Sciatic nerve (tissue), 2 donors: ENCODE measurements at regions of chr18 and their contacts with region 1.

Region 1: DNA sequence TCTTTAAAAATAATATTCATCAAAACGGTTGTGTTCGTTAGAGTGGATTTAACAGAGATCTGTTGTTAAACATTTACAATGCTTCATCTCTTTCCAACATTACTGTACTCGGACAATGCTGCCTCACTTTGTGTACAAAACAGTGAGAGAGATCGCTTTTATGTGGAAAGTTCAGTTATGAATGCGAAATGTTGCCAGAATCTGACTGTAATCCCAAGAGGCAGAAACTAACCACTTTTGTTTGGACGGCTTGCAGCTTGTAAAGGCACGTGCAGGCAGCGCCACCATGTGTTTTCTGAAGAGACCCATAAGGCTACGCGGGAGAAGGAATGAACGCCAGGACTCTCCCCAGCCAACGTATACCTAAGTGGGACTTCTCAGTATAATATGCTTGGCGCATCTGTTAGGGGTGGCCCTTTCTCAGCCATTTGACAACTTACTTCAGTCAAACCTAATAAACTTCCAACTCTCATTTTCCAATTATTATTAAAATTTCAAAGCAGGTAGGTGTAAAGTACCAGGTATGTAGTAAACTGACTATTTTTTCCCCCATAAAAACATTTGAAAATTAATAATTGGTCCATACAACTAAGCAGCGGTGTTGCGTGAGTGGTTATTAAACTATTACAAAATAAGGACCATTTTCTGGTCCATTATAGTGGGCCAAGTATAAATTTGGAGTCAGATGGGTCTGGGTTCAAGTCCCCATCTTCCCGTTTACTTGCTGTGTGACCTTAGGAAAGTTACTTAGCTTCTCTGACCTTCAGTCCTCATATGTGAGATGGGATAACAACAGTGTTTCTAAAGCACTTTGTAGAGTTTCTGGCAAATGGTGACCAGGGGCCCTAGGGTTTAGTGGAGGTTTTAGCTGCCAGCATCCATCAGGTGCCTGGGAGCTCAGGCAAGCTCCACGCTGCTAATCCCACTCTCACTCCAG is 5.6 kb upstream of the NAPG start:
- DNase-seq: peak; percentile 92
- ATAC-seq: peak; percentile 90

Region 2: GRCh38 chr18:9971313-9971920 is 548.9 kb before region 1 on chr18:
- intact Hi-C with region 1: loop called (anchors 2 kb)
- DNase-seq: peak; percentile 87
- ATAC-seq: peak; percentile 84